GM18951 (cell line): ENCODE measurements at regions of chr10 and their contacts with region 1.

Region 1: DNA sequence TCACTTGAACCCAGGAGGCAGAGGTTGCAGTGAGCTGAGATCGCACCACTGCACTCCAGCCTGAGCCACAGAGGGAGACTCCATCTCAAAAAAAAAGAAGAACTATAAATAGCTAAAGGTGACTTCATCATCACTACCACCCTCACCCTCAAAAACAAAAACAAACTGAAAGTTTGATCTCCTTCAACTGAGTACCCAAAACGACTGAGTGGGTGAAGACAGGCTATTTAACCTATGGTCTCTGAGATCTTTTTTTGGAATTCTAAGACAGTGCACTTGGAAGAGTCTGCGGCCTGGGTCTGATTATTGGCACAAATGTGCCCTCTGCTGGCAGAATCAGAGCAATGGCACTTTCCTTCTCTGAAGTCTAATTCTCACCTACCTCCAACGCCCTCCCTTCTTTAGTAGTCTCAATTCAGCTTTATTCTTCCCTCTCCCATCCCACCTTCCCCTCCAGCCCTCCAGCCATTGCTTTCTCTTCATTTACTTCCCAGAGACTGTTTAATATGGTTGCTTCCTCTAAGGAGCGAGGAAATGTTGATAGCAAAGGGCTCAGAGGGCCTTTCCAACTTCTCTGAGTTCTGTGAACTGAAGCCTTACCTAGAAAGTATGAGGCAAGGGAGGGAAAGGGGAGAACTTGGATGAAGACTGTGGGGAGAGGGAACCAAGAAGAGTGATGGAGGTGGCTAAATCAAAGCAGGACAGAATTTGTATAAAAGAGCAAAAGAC is 2.9 kb upstream of the MYOZ1 start:
- POLR2A ChIP-seq: no peak

Region 2: GRCh38 chr10:73252445-73253224 is 391.5 kb before region 1 on chr10 and contains the start of gene MRPS16:
- in situ Hi-C with region 1: loop called (anchors 10 kb)
- POLR2A ChIP-seq: peak; percentile 91

Region 3: GRCh38 chr10:73529089-73529832 is 114.9 kb before region 1 on chr10:
- in situ Hi-C with region 1: loop called (anchors 5 kb)
- POLR2A ChIP-seq: no peak